ENCODE measurements at regions of chr1 and their contacts with region 1.

Region 1: DNA sequence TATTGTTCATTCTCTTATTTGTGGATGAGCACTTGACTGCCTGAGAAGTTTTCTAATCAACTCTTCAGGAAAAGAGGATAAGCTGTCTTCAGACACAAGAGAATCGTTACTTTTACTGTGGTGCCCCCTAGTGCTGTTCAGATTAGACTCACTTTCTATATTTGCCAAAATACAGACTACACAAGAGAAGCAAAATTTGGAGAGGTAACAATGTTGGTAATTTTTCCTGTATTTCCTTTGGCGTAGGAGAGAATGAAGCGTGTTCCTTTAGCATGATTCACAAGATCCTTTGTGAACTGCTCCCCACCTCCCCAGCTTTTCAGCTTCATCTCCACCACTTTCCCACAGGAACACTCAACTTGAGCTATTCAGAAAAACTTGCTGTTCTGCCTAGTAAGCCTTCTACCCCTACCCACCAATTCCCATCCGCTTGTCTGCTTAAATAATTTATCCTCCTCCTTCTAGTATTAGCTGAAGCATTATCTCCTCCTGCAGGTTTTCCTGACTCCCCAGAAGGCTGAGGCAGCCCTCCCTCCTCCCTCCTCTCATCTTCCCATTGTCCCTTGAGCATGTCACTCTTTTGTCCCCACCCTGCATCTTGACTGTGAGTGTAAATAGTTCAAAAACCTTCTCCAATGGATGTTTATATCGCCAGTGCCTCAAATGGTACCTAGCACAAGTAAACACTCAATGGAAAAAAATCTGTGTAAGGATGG is 4.5 kb downstream of the TNFSF4 start:
- H3K4me3 ChIP-seq: no peak overlapping the region
- H3K27ac ChIP-seq: no peak overlapping the region
- H3K4me1 ChIP-seq: no peaks in the 10 kb centered on the region
- CTCF ChIP-seq: peak; percentile 37; the same call in 1 of the 2 replicates

Region 2: GRCh38 chr1:172745014-172745413 is 457.6 kb before region 1 on chr1:
- CTCF ChIA-PET with region 1: interaction called, 162 read pairs
- POLR2A ChIA-PET with region 1: no interaction called
- H3K4me3 ChIP-seq: no peak overlapping the region
- H3K27ac ChIP-seq: no peak overlapping the region
- H3K4me1 ChIP-seq: no peaks in the 10 kb centered on the region
- CTCF ChIP-seq: peak; percentile 85

Region 3: DNA sequence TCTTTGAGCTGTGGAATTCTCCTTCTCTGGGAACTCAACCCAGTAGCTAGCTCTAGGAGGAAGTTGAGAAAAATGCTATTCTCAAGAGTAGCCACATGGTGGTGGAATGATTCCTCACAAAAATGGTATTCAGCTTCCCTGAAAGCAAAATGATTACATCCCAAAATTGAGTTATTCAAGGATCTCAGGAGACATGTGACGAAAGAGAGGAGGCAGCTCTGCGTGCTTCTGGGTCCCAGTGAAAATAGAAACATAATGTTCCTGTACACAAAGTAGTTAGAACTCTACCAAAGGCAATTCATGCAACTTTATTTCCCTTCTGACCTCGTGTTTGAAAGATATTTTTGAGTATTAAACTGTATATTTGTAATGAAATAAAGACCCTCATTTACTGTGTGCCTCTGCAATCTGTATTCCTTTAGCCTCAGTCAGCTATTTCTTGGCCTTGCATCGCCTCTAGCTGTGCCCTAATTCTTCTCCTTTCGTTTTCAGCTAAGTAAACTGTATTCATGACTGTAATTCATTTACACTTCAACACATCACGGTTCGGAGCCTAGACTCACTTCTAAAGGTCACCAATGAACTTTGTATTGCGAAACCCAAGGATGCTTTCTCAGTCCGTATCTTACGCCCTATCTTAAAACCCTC is 376.4 kb before region 1 on chr1:
- CTCF ChIA-PET with region 1: interaction called, 159 read pairs
- POLR2A ChIA-PET with region 1: interaction called, 3 read pairs
- H3K4me3 ChIP-seq: no peak overlapping the region
- H3K27ac ChIP-seq: no peak overlapping the region
- H3K4me1 ChIP-seq: no peaks in the 10 kb centered on the region
- CTCF ChIP-seq: peak; percentile 35

Region 4: DNA sequence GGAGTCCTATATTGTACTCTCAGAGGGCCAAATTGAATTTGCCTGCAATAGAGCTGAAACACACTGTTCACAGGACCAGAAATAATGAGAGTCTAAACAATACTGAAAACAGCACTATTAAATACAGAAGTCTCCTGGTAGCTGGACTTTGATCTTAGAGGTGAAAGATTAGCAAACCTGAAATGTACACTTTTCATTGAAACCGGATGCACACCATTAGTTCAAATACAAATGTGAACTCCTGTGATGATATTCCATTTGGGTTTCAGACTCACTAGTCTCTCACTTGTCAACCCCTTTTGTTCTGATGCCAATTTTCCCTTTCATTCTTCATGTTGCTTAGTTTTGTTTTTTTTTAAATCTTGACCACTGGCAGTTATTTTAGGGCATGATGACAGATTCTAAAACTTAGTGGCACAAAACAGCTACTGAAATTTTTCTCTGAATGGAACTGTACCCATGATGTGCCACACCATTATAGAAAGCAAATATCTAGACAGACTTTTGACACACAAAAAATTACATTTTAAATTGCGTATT is 10.4 kb after region 1 on chr1:
- CTCF ChIA-PET with region 1: interaction called, 29 read pairs
- POLR2A ChIA-PET with region 1: no interaction called
- H3K4me3 ChIP-seq: no peak overlapping the region
- H3K27ac ChIP-seq: no peak overlapping the region
- H3K4me1 ChIP-seq: no peaks in the 10 kb centered on the region
- CTCF ChIP-seq: no peak